ENCODE measurements at regions of chr19 and their contacts with region 1.

Region 1: GRCh38 chr19:56155124-56155687 is 14.1 kb downstream of the ZNF444 start:
- DNase-seq: no peak
- H3K4me3 ChIP-seq: no peak overlapping the region
- H3K27ac ChIP-seq: no peak overlapping the region
- H3K4me1 ChIP-seq: peaks cover 0 to 14% (median 0%) of the 10 kb centered on the region in 3 donors
- H3K27me3 ChIP-seq: no peaks in the 10 kb centered on the region
- CTCF ChIP-seq: peak in 3 of 6 experiments; percentile 10 to 51 (median 15)
- POLR2A ChIP-seq: no peak

Region 2: GRCh38 chr19:55958356-55958755 is 196.8 kb before region 1 on chr19:
- intact Hi-C with region 1: no loop called
- DNase-seq: no peak
- H3K4me3 ChIP-seq: no peak overlapping the region
- H3K27ac ChIP-seq: no peak overlapping the region
- H3K4me1 ChIP-seq: no peaks in the 10 kb centered on the region
- H3K27me3 ChIP-seq: no peaks in the 10 kb centered on the region
- CTCF ChIP-seq: no peak
- POLR2A ChIP-seq: no peak

Region 3: DNA sequence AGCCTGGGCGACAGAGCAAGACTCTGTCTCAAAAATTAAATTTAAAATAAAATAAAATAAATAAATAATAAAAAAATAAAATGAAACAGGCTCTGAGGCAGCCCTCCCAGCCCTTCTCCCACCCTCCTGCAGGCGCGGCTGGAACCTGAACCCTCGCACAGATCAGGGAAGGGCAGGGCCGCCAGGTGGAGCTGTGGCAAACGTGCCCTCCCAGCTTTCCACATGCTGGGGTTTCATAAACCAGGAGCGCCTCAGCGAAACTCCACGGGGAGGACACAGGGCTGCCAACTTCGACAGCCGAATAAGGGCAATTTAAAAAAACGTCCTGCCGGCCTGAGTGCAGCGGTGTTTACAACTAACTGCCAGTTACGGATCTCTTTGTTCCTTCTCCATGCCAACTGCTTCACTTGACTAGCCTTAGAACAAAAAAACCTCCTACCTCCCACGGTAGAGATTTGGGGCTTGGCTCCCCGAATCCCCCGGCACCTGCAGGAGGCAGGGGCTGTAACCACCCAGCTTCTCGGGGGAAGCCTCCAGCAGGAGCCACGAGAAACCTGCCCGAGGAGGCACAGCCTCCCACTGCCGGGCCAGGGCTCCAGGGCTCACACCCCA is 50.0 kb before region 1 on chr19:
- intact Hi-C with region 1: loop called (anchors 10 kb)
- DNase-seq: no peak
- H3K4me3 ChIP-seq: peak overlapping the region in 2 of 4 donors; percentile 11 to 44
- H3K27ac ChIP-seq: peak overlapping the region; percentile 21 to 84 (median 70)
- H3K4me1 ChIP-seq: peaks cover 33 to 69% (median 53%) of the 10 kb centered on the region in 3 donors
- H3K27me3 ChIP-seq: no peaks in the 10 kb centered on the region
- CTCF ChIP-seq: peak; percentile 71 to 80 (median 76)
- POLR2A ChIP-seq: no peak